Activated CD8-positive, alpha-beta T cell treated with anti-CD3 and anti-CD28 coated beads for 36 hours (primary cell): ENCODE measurements at regions of chr6 and their contacts with region 1.

Region 1: GRCh38 chr6:39003072-39003471 is 45.5 kb upstream of the GLP1R start:
- DNase-seq: peak; percentile 54
- ATAC-seq: no peak
- H3K4me3 Mint-ChIP-seq: no peak overlapping the region
- H3K27ac Mint-ChIP-seq: no peak overlapping the region
- H3K4me1 Mint-ChIP-seq: no peaks in the 10 kb centered on the region
- H3K27me3 Mint-ChIP-seq: peaks cover 32% of the 10 kb centered on the region
- CTCF ChIP-seq: peak; percentile 47

Region 2: DNA sequence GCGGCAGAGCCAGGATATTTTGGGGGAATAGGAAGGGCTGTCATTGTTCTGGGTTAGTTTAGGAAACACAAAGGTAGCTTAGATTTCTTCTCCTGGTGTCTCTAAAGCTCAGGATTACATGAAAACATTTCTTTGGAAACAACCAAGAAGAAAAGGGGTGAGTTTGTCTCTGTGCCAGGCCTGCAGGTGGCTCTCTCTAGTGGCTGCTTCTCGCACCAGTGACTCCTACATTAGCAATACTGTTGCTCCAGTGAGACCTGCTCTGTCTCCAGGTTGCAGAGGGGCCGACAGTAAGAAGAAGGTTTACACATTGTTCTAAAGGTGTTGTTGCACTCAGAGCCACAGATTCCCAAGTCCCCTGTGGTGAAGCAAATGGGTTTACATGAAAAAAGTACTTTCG is 59.1 kb before region 1 on chr6:
- CTCF ChIA-PET with region 1: no interaction called
- POLR2A ChIA-PET with region 1: no interaction called
- intact Hi-C with region 1: no loop called
- DNase-seq: no peak
- ATAC-seq: no peak
- H3K4me3 Mint-ChIP-seq: no peak overlapping the region
- H3K27ac Mint-ChIP-seq: no peak overlapping the region
- H3K4me1 Mint-ChIP-seq: no peaks in the 10 kb centered on the region
- H3K27me3 Mint-ChIP-seq: no peaks in the 10 kb centered on the region
- CTCF ChIP-seq: no peak

Region 3: GRCh38 chr6:38973178-38974054 is 29.7 kb before region 1 on chr6:
- CTCF ChIA-PET with region 1: interaction called, 22 read pairs
- POLR2A ChIA-PET with region 1: no interaction called
- intact Hi-C with region 1: no loop called
- DNase-seq: peak; percentile 51
- ATAC-seq: peak; percentile 97
- H3K4me3 Mint-ChIP-seq: no peak overlapping the region
- H3K27ac Mint-ChIP-seq: no peak overlapping the region
- H3K4me1 Mint-ChIP-seq: peaks cover 2% of the 10 kb centered on the region
- H3K27me3 Mint-ChIP-seq: peaks cover 13% of the 10 kb centered on the region
- CTCF ChIP-seq: peak; percentile 68

Region 4: GRCh38 chr6:39029156-39030011 is 26.3 kb after region 1 on chr6:
- CTCF ChIA-PET with region 1: interaction called, 22 read pairs
- POLR2A ChIA-PET with region 1: no interaction called
- intact Hi-C with region 1: no loop called
- DNase-seq: peak; percentile 75
- ATAC-seq: peak; percentile 99
- H3K4me3 Mint-ChIP-seq: no peak overlapping the region
- H3K27ac Mint-ChIP-seq: no peak overlapping the region
- H3K4me1 Mint-ChIP-seq: no peaks in the 10 kb centered on the region
- H3K27me3 Mint-ChIP-seq: peaks cover 42% of the 10 kb centered on the region
- CTCF ChIP-seq: peak; percentile 84

Region 5: DNA sequence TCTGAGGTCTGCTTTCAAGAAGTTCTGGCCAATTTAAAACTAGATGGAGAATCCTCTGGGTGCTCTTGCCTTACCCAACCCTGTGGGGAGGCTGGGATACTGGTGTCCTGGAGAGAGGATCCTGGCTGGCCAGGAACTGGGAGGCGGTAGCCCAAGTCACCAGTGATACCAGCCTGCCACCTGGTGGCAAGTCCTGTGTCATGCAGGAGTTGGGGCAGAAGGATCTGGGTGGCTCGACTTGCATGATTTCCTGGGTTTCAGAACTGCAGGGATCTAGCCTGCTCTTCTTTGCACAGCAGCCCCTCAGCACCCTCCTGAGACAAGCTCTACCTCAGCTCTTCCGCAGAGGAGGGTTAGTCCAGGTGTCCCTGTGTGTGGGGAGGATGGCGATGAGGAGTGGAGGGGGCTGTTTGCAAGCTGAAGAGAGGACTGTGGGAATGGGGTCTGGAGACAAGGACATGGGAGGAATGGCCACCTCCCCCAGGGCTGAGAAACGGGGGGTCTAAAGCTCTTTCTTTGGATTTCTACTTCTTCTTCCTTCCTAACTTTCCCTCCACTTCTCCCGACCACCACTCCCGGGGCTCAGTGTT is 307.0 kb after region 1 on chr6:
- CTCF ChIA-PET with region 1: interaction called, 64 read pairs
- POLR2A ChIA-PET with region 1: no interaction called
- intact Hi-C with region 1: no loop called
- DNase-seq: peak; percentile 68
- ATAC-seq: peak; percentile 83
- H3K4me3 Mint-ChIP-seq: no peak overlapping the region
- H3K27ac Mint-ChIP-seq: no peak overlapping the region
- H3K4me1 Mint-ChIP-seq: peaks cover 2% of the 10 kb centered on the region
- H3K27me3 Mint-ChIP-seq: peaks cover 27% of the 10 kb centered on the region
- CTCF ChIP-seq: peak; percentile 77